CD4-positive, alpha-beta memory T cell (primary cell): ENCODE measurements at regions of chr19 and their contacts with region 1.

Region 1: GRCh38 chr19:48271531-48272151 is 1.8 kb downstream of the ZNF114 start:
- DNase-seq: no peak
- H3K4me3 ChIP-seq: peak overlapping the region in 1 of 2 donors; percentile 19
- H3K4me3 Mint-ChIP-seq: peak overlapping the region; percentile 70 to 90 (median 80)
- H3K27ac ChIP-seq: no peak overlapping the region
- H3K27ac Mint-ChIP-seq: peak overlapping the region in 2 of 7 donors; percentile 63 to 70
- H3K4me1 ChIP-seq: peaks cover 4% of the 10 kb centered on the region
- H3K4me1 Mint-ChIP-seq: peaks cover 5 to 24% (median 15%) of the 10 kb centered on the region in 4 donors
- H3K27me3 ChIP-seq: no peaks in the 10 kb centered on the region
- H3K27me3 Mint-ChIP-seq: peaks cover 8 to 12% of the 10 kb centered on the region in 2 donors

Region 2: GRCh38 chr19:48290771-48291488 is 19.3 kb after region 1 on chr19:
- CTCF ChIA-PET with region 1: interaction called, 9 read pairs
- POLR2A ChIA-PET with region 1: no interaction called
- intact Hi-C with region 1: loop called (anchors 1 kb)
- DNase-seq: peak; percentile 46 to 65 (median 48)
- H3K4me3 ChIP-seq: peak overlapping the region; percentile 29 to 58
- H3K4me3 Mint-ChIP-seq: peak overlapping the region; percentile 77 to 86 (median 81)
- H3K27ac ChIP-seq: no peak overlapping the region
- H3K27ac Mint-ChIP-seq: peak overlapping the region in 2 of 7 donors; percentile 27 to 68
- H3K4me1 ChIP-seq: peaks cover 8% of the 10 kb centered on the region
- H3K4me1 Mint-ChIP-seq: peaks cover 0 to 8% (median 3%) of the 10 kb centered on the region in 4 donors
- H3K27me3 ChIP-seq: no peaks in the 10 kb centered on the region
- H3K27me3 Mint-ChIP-seq: peaks cover 3 to 13% of the 10 kb centered on the region in 2 donors